ENCODE measurements at regions of chr15 and their contacts with region 1.

Region 1: DNA sequence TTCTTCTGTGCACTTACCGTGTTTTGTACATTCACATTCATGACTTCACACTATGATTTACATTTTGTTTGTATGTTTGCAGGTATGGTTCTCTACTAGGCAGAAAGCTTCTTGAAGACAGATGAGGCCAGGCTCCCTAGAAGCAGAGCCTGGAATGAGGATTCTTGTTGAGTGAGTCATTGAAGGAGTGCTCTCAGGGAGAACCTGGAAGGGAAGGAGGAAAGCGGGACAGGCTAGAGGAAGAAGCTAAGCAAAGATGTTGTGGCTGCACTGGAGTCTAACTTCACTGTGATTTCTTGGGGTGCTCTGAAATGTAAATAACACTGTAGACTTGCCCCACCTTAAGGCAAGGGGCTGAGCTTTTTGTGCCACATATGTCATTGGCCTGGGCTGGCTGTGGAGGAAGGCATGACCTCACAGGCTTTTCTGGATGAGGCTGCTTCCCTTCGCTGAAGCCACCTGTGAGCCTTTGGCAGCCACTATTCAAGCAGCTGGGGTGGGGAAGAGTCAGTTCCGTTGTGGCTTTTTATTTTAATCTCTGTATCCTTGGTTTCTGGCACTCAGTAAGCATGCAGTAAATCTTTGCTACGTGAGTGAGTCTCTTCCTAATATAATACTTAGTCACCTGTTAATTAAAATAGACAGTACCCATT is 307.3 kb downstream of the SV2B start:
- DNase-seq: peak; percentile 48
- H3K4me3 Mint-ChIP-seq: peak overlapping the region; percentile 13
- H3K27ac Mint-ChIP-seq: peak overlapping the region; percentile 61
- H3K4me1 Mint-ChIP-seq: peaks cover 24% of the 10 kb centered on the region
- H3K27me3 Mint-ChIP-seq: no peaks in the 10 kb centered on the region
- CTCF ChIP-seq: no peak

Region 2: DNA sequence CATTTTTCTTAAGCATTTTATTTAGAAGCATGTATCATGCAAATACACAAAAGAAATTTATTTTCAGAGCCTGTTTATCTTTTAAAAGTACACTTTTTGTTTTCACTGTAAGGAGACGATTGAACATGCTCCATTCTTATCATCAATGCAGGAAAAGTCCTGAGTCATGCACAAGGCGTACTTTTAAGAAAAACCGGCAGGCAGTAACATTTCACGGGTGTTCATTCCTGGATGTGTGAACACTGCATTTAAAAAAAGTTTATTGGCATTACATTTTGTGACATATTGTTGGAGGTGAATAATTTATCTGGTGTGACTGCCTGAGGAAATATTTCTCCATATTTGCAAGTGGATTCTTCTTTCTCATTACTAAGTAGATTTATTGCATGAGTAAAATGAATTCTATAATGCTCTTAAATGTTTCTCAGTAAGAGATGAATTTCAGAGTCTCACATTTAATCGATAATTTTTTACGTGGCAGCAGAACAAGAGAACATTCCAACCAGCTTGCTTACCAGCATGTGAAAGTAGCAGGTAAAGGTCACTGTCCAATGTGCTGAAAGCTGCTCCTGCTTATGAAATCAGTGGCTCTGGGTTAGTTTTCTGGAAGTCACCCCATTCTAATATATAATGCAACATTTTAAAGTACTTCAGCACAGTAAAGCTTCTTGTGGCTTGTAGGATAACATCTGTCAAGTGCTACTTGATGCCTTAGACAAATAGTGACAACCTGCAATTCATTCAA is 220.3 kb before region 1 on chr15:
- CTCF ChIA-PET with region 1: no interaction called
- intact Hi-C with region 1: no loop called
- DNase-seq: peak; percentile 47
- H3K4me3 Mint-ChIP-seq: no peak overlapping the region
- H3K27ac Mint-ChIP-seq: no peak overlapping the region
- H3K4me1 Mint-ChIP-seq: peaks cover 10% of the 10 kb centered on the region
- H3K27me3 Mint-ChIP-seq: peaks cover 55% of the 10 kb centered on the region
- CTCF ChIP-seq: no peak

Region 3: DNA sequence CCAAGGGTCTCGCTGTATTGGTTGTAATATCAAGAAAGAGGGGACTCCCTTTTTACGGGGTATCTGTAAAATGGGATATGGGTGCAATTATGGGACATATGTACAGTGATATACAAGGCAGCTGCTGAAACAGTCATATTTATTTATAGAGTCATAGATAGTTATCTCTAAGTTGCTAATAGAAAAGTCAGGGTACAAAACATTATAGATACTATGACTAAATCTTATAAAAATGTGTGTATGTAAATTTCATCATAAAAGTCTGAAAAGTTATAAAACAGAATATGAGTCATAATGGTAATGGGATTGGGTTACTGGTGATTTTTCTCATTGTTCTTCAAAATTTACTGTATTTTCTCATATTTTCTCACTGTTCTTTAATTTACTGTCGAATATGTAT is 101.3 kb after region 1 on chr15:
- CTCF ChIA-PET with region 1: no interaction called
- intact Hi-C with region 1: no loop called
- DNase-seq: no peak
- H3K4me3 Mint-ChIP-seq: no peak overlapping the region
- H3K27ac Mint-ChIP-seq: no peak overlapping the region
- H3K4me1 Mint-ChIP-seq: peaks cover 8% of the 10 kb centered on the region
- H3K27me3 Mint-ChIP-seq: no peaks in the 10 kb centered on the region
- CTCF ChIP-seq: no peak

Region 4: GRCh38 chr15:91522663-91523332 is 115.4 kb after region 1 on chr15:
- CTCF ChIA-PET with region 1: no interaction called
- intact Hi-C with region 1: loop called (anchors 5 kb)
- DNase-seq: peak; percentile 25
- H3K4me3 Mint-ChIP-seq: no peak overlapping the region
- H3K27ac Mint-ChIP-seq: no peak overlapping the region
- H3K4me1 Mint-ChIP-seq: peaks cover 20% of the 10 kb centered on the region
- H3K27me3 Mint-ChIP-seq: no peaks in the 10 kb centered on the region
- CTCF ChIP-seq: peak; percentile 29

Measured in Calu3 (cell line).